ENCODE measurements at regions of chr6 and their contacts with region 1.

Region 1: GRCh38 chr6:26156076-26156849 is 69.0 kb downstream of the HFE start:
- DNase-seq: peak; percentile 89
- H3K4me3 Mint-ChIP-seq: peak overlapping the region; percentile 91
- H3K27ac Mint-ChIP-seq: peak overlapping the region; percentile 95
- H3K4me1 Mint-ChIP-seq: peaks cover 56% of the 10 kb centered on the region
- H3K27me3 Mint-ChIP-seq: peaks cover 3% of the 10 kb centered on the region

Region 2: DNA sequence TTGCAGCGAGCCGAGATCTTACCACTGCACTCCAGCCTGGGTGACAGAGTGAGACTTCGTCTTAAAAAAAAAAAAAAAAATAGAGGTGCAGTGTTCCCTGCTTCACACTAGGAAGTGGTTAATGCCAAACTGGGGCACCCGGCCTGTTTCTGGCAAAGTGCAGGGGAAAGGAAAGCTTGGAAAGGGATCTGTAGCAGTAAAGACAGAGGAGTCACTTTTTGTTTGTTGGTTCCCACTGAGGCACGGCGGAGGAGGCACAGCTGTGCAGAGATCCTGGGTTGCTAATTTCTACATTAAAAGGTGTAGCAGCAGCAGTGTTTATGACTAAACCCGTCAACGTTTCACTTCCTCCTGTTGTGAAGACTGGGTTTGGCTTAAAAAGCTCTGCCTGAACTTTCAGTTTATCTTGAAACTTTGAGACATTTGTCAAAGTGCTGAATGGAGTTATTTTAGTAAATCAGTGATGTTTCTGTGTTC is 751.5 kb before region 1 on chr6:
- intact Hi-C with region 1: no loop called
- DNase-seq: peak; percentile 3
- H3K4me3 Mint-ChIP-seq: peak overlapping the region; percentile 72
- H3K27ac Mint-ChIP-seq: peak overlapping the region; percentile 91
- H3K4me1 Mint-ChIP-seq: no peaks in the 10 kb centered on the region
- H3K27me3 Mint-ChIP-seq: peaks cover 2% of the 10 kb centered on the region

Region 3: DNA sequence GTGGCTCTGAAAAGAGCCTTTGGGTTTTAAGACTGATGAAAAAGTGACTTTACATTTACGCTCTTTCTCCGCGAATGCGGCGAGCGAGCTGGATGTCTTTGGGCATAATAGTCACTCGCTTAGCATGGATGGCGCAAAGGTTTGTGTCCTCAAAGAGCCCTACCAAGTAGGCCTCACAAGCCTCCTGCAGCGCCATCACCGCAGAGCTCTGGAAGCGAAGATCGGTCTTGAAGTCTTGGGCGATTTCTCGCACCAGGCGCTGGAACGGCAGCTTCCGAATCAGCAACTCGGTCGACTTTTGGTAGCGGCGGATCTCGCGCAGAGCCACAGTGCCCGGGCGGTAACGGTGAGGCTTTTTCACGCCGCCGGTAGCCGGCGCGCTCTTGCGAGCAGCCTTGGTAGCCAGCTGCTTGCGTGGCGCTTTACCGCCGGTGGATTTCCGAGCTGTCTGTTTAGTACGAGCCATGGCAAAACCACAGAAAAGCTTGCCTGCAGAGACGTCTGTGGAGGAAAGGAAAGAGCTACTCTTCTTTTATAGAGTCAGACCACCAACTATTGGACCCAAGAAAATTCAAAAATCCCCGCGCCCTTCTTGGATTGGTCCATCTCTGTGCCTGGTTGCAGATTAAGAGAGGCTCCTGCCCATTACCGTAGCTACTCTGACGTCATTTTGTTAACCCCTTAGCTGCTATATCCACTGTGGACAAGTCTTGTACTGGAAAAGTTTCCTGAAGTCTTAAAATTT is 124.5 kb before region 1 on chr6:
- intact Hi-C with region 1: loop called (anchors 2 kb)
- DNase-seq: peak; percentile 89
- H3K4me3 Mint-ChIP-seq: peak overlapping the region; percentile 94
- H3K27ac Mint-ChIP-seq: peak overlapping the region; percentile 98
- H3K4me1 Mint-ChIP-seq: peaks cover 89% of the 10 kb centered on the region
- H3K27me3 Mint-ChIP-seq: peaks cover 2% of the 10 kb centered on the region

Region 4: GRCh38 chr6:26122793-26123674 is 33.2 kb before region 1 on chr6:
- intact Hi-C with region 1: loop called (anchors 1 kb)
- DNase-seq: peak; percentile 86
- H3K4me3 Mint-ChIP-seq: peak overlapping the region; percentile 99
- H3K27ac Mint-ChIP-seq: peak overlapping the region; percentile 100
- H3K4me1 Mint-ChIP-seq: peaks cover 49% of the 10 kb centered on the region
- H3K27me3 Mint-ChIP-seq: peaks cover 3% of the 10 kb centered on the region

Region 5: DNA sequence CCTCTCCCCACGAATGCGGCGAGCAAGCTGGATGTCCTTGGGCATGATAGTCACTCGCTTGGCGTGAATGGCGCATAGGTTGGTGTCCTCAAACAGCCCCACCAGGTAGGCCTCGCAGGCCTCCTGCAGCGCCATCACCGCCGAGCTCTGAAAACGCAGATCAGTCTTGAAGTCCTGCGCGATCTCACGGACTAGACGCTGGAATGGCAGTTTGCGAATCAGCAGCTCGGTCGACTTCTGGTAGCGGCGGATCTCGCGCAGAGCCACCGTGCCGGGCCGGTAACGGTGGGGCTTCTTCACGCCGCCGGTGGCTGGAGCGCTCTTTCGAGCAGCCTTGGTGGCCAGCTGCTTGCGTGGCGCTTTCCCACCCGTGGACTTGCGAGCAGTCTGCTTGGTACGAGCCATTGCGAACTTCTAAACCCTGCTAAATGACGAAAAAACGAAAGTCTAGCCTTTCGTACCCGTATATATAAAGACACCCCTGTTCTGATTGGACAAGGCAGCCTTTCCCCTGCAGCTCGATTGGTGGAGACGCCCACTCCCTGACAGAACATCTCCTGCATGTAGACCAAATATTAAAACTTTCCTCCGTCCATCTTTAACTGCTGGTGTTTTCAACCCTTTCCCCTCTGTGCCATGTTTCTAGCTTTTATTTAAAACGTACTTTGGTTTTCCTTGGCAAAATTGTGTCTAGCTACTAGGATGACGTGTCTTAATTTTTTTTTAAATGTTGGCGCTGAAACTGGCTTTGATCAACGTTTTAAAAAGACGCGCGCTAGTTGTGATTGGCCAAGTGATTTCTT is 40.8 kb after region 1 on chr6:
- intact Hi-C with region 1: loop called (anchors 1 kb)
- DNase-seq: peak; percentile 84
- H3K4me3 Mint-ChIP-seq: peak overlapping the region; percentile 92
- H3K27ac Mint-ChIP-seq: peak overlapping the region; percentile 95
- H3K4me1 Mint-ChIP-seq: peaks cover 54% of the 10 kb centered on the region
- H3K27me3 Mint-ChIP-seq: no peaks in the 10 kb centered on the region

Region 6: DNA sequence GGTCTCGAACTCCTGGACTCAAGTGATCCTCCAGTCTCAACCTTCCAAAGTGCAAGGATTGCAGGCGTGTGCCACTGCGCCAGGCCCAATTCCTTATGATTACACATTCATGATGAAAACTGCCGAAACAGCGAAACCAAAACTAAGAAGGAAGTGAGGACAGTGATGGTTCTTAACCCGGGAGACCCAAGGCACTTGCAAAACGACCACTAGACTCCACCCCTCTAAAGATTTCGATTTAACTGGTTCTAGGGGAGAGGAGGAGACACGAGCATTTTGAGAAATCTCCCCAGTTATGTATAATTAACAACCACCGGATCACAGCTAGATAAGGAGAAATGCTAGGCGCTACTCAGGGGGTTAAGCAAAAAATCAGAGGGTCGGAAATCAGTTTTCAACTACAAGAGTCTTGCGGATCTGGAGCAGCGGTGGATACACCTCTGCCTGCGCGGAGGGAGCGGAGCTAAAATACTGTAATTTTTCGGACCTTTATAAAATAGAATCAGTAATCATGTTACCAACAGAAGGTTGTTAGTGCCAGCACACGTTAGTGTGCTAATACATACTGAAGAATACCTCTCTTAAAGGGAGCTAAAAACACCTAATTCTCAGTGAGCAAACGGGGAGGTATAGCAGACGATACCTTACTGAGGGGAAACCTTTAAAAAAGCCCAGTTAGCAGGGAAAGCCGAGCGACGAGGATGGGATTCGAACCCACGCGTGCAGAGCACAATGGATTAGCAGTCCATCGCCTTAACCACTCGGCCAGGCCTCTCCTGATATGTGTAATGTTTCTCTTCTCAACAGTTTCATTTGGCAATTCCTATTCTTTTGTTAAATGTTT is 148.8 kb after region 1 on chr6:
- intact Hi-C with region 1: no loop called
- DNase-seq: peak; percentile 41
- H3K4me3 Mint-ChIP-seq: peak overlapping the region; percentile 85
- H3K27ac Mint-ChIP-seq: peak overlapping the region; percentile 89
- H3K4me1 Mint-ChIP-seq: peaks cover 69% of the 10 kb centered on the region
- H3K27me3 Mint-ChIP-seq: peaks cover 3% of the 10 kb centered on the region

Region 7: GRCh38 chr6:27146706-27147505 is 990.6 kb after region 1 on chr6:
- intact Hi-C with region 1: loop called (anchors 1 kb)
- DNase-seq: peak; percentile 82
- H3K4me3 Mint-ChIP-seq: no peak overlapping the region
- H3K27ac Mint-ChIP-seq: no peak overlapping the region
- H3K4me1 Mint-ChIP-seq: peaks cover 17% of the 10 kb centered on the region
- H3K27me3 Mint-ChIP-seq: no peaks in the 10 kb centered on the region

Region 8: GRCh38 chr6:27871924-27872638 is 1715.8 kb after region 1 on chr6:
- intact Hi-C with region 1: loop called (anchors 2 kb)
- DNase-seq: peak; percentile 87
- H3K4me3 Mint-ChIP-seq: peak overlapping the region; percentile 88
- H3K27ac Mint-ChIP-seq: peak overlapping the region; percentile 96
- H3K4me1 Mint-ChIP-seq: peaks cover 63% of the 10 kb centered on the region
- H3K27me3 Mint-ChIP-seq: no peaks in the 10 kb centered on the region

Measured in activated T-helper 1 cell treated with anti-CD3 and anti-CD28 coated beads, Interleukin-12 subunit alpha, Interleukin-12 subunit beta, Interleukin-2, Interleukin-4 antibody, amounts not matched to agents 30 ng/mL and 10 ng/mL and 1 ng/mL, durations not matched to agents 14 hours and 24 hours and 36 hours (primary cell).